Left lung (tissue), 14 donors: ENCODE measurements at regions of chr3 and their contacts with region 1.

Region 1: GRCh38 chr3:4978204-4978965 is 852 bp upstream of the BHLHE40 start:
- DNase-seq: peak; percentile 77 to 100 (median 94)
- ATAC-seq: peak; percentile 69
- H3K4me3 ChIP-seq: peak overlapping the region; percentile 50 to 99
- H3K27ac ChIP-seq: peak overlapping the region; percentile 99 to 100
- H3K4me1 ChIP-seq: peaks cover 9 to 45% of the 10 kb centered on the region in 2 donors
- H3K27me3 ChIP-seq: no peaks in the 10 kb centered on the region
- CTCF ChIP-seq: no peak

Region 2: DNA sequence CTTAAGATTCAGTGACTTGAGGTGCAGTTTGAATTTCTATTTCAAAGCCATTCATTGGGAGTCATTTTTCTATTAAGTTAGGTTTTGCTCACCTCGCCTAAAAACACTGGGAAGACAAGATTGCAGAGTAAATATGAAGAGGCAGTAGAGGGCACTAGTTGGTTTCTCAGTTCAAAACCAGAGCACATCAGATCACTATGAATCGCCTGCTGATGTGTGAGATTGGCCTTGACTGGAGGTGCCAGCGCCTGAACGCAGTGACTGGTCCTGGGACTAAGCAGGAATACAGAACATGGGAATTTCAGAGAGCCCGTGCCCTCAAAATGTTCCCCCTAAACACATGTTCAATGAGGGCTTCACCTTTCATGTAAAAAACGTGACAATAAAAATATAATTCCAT is 256.3 kb before region 1 on chr3:
- intact Hi-C with region 1: loop called in 1 of 2 experiments (anchors 5 kb)
- DNase-seq: no peak
- ATAC-seq: peak; percentile 80
- H3K4me3 ChIP-seq: no peak overlapping the region
- H3K27ac ChIP-seq: peak overlapping the region; percentile 7 to 77
- H3K4me1 ChIP-seq: peaks cover 22 to 50% of the 10 kb centered on the region in 2 donors
- H3K27me3 ChIP-seq: no peaks in the 10 kb centered on the region
- CTCF ChIP-seq: peak in 1 of 2 donors; percentile 31